Activated T-helper 2 cell treated with anti-CD3 and anti-CD28 coated beads, Interferon-gamma antibody, Interleukin-2, Interleukin-4, amounts not matched to agents 10 μg/mL and 5 μg/mL and 100 μg/mL, durations not matched to agents 14 hours and 24 hours and 36 hours (primary cell): ENCODE measurements at regions of chrX and their contacts with region 1.

Region 1: DNA sequence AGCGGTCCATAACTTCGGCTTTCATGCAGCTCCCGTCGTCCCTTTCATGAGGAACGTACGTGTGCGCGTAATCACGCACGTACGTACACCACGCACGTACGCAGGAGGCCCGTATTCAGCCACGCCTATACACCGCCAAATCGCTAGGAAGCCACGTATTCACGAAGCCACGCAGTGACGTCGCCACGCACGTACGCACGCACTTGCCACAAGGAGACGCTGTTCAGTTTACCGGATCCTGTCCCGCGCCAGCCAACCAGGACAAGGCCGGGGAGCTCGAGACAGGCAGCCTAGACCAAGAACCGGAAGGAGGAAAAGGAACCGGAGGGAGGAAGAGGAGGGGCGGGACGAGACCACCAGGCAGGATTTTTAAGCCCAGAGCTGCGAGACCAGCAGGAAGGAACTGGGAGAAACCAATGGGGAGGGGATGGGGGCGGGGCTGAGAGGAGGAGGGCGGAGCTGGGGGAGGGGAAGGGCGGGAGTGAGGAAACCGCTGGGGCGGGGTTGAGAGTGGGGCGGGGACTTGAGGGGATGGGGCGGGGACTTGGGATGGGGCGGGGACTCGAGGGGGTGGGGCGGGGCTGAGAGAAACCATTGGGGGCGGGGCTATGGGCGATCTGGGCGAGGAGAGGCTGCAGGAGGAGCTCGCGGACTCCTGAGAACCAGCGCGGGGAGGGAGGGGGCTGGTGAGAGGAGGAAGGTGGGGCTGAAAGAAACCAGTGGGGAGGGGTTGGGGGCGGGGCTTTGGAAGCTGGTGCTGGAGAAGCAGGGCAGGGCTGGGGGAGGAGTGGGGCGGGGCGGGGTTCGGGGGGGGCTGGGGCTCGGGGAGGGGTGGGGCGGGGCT is at the start of gene EOLA2:
- DNase-seq: peak; percentile 90
- H3K4me3 Mint-ChIP-seq: peak within 1 kb of the TSS; percentile 86
- H3K27ac Mint-ChIP-seq: peak within 1 kb of the TSS; percentile 99
- H3K4me1 Mint-ChIP-seq: peaks cover 1% of the 10 kb centered on the region
- H3K27me3 Mint-ChIP-seq: no peaks in the 10 kb centered on the region
- total RNA-seq, gene EOLA2: 45.1 and 45.2 TPM in 2 replicates

Region 2: DNA sequence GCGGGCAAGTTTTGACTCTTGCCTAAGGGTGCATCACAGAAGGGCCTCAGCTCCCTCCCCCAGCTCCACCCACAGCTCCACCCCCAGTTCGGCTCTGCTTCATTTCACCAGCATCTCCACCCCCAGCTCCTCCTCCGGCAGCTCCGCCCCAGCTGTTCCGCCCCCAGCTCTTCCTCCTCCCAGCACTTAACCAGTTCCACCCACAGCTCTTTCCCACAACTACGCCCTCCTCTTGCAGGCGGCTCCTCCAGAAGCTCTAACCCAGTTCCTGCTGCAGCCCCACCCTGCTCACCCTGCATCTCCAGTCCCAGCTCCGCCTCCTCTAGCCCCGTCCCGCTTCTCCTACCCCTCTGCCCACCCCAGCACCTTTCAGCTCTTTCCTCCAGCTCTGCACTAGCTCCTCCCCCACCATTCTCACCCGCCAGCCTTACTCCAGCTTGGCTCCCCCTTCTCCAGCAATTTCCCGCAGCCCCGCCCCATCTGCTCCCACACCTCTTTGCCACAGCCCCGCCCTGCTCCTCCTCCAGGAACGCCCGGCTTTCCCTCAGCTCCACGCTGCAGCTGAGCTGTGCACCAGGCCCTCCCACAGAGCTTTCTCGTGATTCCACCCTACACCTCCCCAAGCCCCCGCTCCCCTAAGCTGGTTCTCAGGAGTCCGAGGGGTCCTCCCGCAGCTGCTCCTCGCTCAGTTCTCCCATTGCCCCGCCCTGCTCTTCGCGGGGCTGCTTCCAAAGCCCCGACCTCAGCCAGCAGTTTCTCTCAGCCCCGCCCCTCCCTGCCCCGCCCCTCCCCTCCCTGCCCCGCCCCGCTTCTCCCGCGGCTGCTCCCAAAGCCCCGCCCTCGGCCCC is 399.1 kb before region 1 on chrX:
- intact Hi-C with region 1: loop called (anchors 10 kb)
- DNase-seq: peak; percentile 83
- H3K4me3 Mint-ChIP-seq: peak overlapping the region; percentile 81
- H3K27ac Mint-ChIP-seq: peak overlapping the region; percentile 76
- H3K4me1 Mint-ChIP-seq: peaks cover 4% of the 10 kb centered on the region
- H3K27me3 Mint-ChIP-seq: no peaks in the 10 kb centered on the region

Region 3: GRCh38 chrX:149871940-149872339 is 66.7 kb before region 1 on chrX:
- intact Hi-C with region 1: loop called (anchors 2 kb)
- DNase-seq: peak; percentile 49
- H3K4me3 Mint-ChIP-seq: no peak overlapping the region
- H3K27ac Mint-ChIP-seq: peak overlapping the region; percentile 47
- H3K4me1 Mint-ChIP-seq: peaks cover 12% of the 10 kb centered on the region
- H3K27me3 Mint-ChIP-seq: peaks cover 7% of the 10 kb centered on the region